Gastrocnemius medialis (tissue), 4 donors: ENCODE measurements at regions of chr2 and their contacts with region 1.

Region 1: DNA sequence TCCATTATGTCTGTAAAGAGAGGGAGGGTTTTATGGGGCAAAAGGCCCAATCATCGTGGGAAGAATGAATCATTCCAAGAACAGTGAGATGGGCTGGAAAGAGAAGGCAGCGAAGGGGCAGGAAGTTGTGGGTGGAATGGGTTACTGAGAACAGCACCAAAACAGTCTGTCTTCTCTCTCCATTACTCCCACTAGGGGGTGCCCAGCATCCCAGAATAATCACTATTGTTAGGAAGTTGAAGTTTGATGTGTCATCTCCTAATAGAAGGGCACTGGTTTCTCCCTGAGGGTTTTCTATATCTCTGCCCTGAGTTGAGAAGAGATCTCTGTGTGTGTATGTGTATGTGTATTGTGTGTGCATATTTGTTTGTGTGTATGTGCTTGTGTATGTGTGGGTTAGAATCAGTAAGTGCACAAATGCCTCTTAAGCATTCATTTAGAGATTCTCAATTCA is 76.6 kb upstream of the MAP4K3 start:
- DNase-seq: peak; percentile 23 to 42
- ATAC-seq: peak; percentile 50 to 79
- H3K4me3 ChIP-seq: no peak overlapping the region
- H3K27ac ChIP-seq: peak overlapping the region; percentile 37 to 75 (median 57)
- H3K4me1 ChIP-seq: peaks cover 43 to 78% of the 10 kb centered on the region in 2 donors
- H3K27me3 ChIP-seq: no peaks in the 10 kb centered on the region
- CTCF ChIP-seq: peak; percentile 44 to 62 (median 50)
- POLR2A ChIP-seq: no peak

Region 2: DNA sequence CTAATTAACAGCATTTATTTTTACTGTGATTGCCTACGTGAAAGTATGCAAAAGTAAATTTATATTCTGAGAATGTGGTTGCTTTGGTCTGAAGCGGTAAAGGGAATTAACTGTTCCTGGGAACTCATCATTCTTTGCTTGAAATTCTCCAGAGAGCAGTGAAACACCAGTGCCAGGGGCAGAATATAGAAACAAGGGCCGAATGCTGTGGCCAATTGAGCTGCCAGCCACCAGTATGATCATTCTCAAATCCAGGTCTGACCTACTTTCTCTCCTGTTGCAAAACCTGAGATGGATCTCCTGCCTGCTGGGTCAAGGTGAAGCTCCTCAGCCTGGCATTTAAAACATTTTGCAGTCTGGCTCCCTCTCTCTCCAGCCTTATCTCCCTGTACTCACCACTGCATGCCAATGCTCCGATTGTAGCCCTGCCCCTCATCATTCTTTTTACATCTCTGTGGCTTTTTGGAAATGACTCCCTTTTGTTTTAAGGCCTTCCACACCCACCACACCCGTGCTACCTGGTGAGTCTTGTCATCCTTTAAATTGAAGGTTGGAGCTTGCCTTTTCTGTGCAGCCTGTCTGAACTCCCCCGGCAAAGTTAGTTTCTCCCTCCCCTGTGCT is 57.6 kb after region 1 on chr2:
- in situ Hi-C with region 1: no loop called
- intact Hi-C with region 1: no loop called
- DNase-seq: peak; percentile 29 to 57
- ATAC-seq: peak; percentile 96 to 98
- H3K4me3 ChIP-seq: no peak overlapping the region
- H3K27ac ChIP-seq: peak overlapping the region; percentile 32 to 74 (median 62)
- H3K4me1 ChIP-seq: peaks cover 38 to 42% of the 10 kb centered on the region in 2 donors
- H3K27me3 ChIP-seq: no peaks in the 10 kb centered on the region
- CTCF ChIP-seq: no peak
- POLR2A ChIP-seq: no peak

Region 3: GRCh38 chr2:39593439-39594393 is 80.0 kb after region 1 on chr2:
- in situ Hi-C with region 1: no loop called
- intact Hi-C with region 1: loop called (anchors 2 kb)
- DNase-seq: peak; percentile 20 to 31
- ATAC-seq: peak; percentile 79 to 86
- H3K4me3 ChIP-seq: no peak overlapping the region
- H3K27ac ChIP-seq: no peak overlapping the region
- H3K4me1 ChIP-seq: no peaks in the 10 kb centered on the region
- H3K27me3 ChIP-seq: no peaks in the 10 kb centered on the region
- CTCF ChIP-seq: peak; percentile 41 to 60 (median 53)
- POLR2A ChIP-seq: no peak

Region 4: DNA sequence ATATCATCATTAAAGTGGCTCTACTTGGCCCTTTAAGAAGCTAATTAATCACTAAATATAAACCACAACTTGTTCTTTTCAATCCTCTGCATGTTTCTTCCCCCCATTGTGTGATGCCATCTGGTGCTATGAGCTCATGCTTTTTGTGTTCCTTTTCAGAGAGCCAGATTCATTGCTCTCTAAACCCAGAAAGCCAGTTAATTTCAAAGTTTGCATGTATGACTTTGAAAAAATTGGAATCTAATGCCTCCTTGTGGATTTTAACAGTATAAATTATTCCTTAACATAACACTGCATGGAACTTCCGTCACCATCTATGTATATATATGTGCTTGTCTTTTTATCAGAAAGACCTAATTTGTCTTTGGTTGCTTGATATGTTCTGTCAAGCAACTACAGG is 183.2 kb after region 1 on chr2:
- in situ Hi-C with region 1: no loop called
- intact Hi-C with region 1: loop called (anchors 1 kb)
- DNase-seq: no peak
- ATAC-seq: peak in 1 of 2 donors; percentile 36
- H3K4me3 ChIP-seq: no peak overlapping the region
- H3K27ac ChIP-seq: peak overlapping the region; percentile 38 to 61 (median 48)
- H3K4me1 ChIP-seq: peaks cover 24 to 29% of the 10 kb centered on the region in 2 donors
- H3K27me3 ChIP-seq: no peaks in the 10 kb centered on the region
- CTCF ChIP-seq: peak; percentile 19 to 36 (median 31)
- POLR2A ChIP-seq: no peak

Region 5: GRCh38 chr2:39730685-39731302 is 217.1 kb after region 1 on chr2:
- in situ Hi-C with region 1: no loop called
- intact Hi-C with region 1: loop called (anchors 5 kb)
- DNase-seq: no peak
- ATAC-seq: peak in 1 of 2 donors; percentile 64
- H3K4me3 ChIP-seq: no peak overlapping the region
- H3K27ac ChIP-seq: no peak overlapping the region
- H3K4me1 ChIP-seq: peaks cover 4 to 19% of the 10 kb centered on the region in 2 donors
- H3K27me3 ChIP-seq: no peaks in the 10 kb centered on the region
- CTCF ChIP-seq: peak in 4 of 5 experiments; percentile 14 to 42 (median 37)
- POLR2A ChIP-seq: no peak